AG04449 (cell line): ENCODE measurements at regions of chr2 and their contacts with region 1.

Region 1: GRCh38 chr2:3536682-3537632 is 17.6 kb upstream of the ADI1 start:
- DNase-seq: no peak
- H3K4me3 ChIP-seq: peak overlapping the region; percentile 58
- CTCF ChIP-seq: peak; percentile 54

Region 2: DNA sequence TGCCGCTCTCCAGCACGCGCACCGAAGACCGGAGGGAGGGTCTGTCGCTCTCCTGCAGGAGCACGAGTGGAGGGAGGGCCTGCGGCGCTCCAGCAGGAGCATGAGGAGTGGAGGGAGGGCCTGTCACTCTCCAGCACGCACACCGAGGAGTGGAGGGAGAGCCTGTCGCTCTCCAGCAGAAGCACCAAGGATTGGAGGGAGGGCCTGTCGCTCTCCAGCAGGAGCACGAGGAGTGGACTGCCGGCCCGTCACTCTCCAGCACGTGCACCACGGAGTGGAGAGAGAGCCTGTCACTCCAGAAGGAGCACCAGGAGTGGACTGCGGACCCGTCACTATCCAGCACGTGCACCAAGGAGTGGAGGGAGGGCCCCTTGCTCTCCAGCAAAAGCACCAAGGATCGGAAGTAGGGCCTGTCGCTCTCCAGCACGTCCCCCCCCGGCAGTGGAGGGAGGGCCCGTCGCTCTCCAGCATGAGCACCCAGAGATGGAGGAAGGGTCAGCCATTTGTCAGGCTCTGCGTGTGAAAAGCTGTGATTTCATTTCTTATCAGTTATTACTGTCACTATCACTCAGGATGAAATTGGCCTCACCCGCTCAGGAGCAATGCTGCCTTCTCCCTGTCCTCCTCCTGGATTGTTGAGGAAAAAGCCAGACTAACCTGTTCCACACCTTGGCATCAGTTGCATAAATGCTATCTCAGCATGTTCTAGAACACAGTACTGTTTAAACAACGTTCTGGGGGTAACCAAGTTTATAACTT is 53.6 kb before region 1 on chr2:
- CTCF ChIA-PET with region 1: no interaction called
- POLR2A ChIA-PET with region 1: no interaction called
- DNase-seq: peak; percentile 63
- H3K4me3 ChIP-seq: no peak overlapping the region
- CTCF ChIP-seq: no peak

Region 3: GRCh38 chr2:3523551-3524041 is 13.4 kb before region 1 on chr2:
- CTCF ChIA-PET with region 1: interaction called, 16 read pairs
- POLR2A ChIA-PET with region 1: interaction called, 9 read pairs
- DNase-seq: no peak
- H3K4me3 ChIP-seq: peak overlapping the region; percentile 15; the same call in 1 of the 2 replicates
- CTCF ChIP-seq: no peak